ENCODE measurements at regions of chr1 and their contacts with region 1.

Region 1: DNA sequence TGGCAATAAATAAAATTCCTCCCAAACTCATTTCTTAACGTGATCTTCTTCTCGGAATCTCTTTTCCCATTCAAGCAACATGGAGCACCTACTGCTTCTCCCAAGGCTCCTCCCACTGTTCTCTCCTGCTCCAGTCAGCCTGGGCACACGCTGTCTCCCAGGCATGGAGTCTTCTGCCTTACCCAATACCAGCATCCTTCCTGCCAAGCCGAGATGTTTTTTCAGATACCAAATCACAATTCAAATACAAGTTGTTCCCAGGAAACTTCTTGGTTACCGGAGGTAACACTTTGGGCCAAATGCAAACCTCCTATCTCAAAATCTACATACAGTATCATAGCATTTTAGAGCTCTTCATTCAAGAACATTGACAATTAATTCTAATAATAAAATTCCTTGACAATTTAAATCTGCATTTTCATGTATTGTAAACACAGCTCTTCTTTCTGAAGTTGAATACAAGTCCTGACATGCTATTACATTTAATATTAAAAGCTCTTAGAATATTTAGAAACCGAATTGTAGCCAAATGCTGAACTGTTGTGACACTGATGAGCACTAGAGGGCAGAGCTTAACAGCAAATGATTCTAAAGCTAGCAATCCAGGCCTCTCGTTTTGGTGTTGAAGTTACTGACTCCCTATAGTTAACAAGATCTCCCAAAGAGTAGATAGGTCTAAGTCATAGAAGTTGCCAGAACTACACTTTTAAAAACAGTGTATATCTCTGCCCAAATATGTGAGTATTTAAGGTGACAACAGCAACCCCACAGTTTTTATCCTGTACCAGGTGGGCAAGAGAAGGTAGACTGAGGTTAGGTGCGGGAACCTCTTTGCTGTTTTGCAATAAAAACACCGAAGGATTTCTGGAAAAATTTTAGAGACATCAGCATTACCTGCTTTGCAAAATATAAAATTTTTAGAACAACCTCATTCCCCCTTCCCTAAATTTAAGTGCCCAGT is 52.3 kb downstream of the BCAR3 start:
- DNase-seq: peak; percentile 62
- H3K4me3 ChIP-seq: no peak overlapping the region
- H3K27ac ChIP-seq: no peak overlapping the region
- H3K4me1 ChIP-seq: no peaks in the 10 kb centered on the region
- H3K27me3 ChIP-seq: no peaks in the 10 kb centered on the region
- CTCF ChIP-seq: peak; percentile 80

Region 2: DNA sequence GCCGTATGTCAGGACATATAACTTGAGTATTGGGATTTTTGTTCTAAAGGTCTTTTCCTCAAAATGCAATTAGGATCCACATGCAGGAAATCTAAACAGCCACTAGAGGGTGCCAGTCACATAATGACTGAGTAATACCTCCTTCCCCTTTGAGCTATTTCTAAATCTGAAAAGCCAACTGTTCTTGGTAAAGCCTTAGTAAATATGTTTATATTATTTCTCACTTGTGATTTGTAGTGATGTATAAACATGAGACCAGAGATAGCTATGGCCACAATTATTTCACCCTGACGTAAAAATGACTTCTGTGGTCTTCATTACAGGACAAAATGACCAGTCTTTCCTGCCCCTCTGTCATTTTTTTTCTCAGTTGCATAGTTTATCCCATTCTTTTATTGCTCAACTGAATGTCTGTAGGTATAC is 324.7 kb before region 1 on chr1:
- intact Hi-C with region 1: loop called (anchors 10 kb)
- DNase-seq: peak; percentile 53
- H3K4me3 ChIP-seq: no peak overlapping the region
- H3K27ac ChIP-seq: no peak overlapping the region
- H3K4me1 ChIP-seq: no peaks in the 10 kb centered on the region
- H3K27me3 ChIP-seq: no peaks in the 10 kb centered on the region
- CTCF ChIP-seq: peak; percentile 92

Region 3: DNA sequence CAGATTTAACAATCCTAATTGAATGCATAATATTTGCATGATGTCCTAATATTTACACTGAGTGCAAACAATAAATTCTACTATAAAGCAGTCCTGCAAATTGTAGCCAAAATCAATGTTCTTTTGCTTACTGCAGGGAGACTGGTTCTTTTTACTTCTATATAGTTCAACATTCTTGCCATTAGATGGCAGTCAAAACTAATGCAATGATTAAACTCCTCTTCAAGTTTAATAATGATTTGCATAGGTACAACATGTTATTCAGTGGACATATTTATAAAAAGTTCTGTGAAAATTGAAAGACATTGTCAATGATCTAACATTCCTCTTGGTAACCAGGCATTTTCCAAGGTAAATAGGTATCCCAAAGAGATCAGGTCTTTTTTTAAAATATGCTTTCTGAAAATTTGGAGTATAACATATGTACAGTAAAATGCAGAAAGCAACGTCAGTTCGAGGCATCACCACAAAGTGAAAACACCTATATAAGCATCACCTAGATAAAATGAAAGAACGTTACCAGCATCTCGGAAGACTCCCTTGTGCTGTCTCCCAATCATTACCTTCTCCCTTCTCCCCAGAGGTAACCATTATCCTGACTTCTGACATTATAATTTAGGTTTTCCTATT is 191.3 kb before region 1 on chr1:
- intact Hi-C with region 1: loop called (anchors 5 kb)
- DNase-seq: no peak
- H3K4me3 ChIP-seq: no peak overlapping the region
- H3K27ac ChIP-seq: no peak overlapping the region
- H3K4me1 ChIP-seq: no peaks in the 10 kb centered on the region
- H3K27me3 ChIP-seq: no peaks in the 10 kb centered on the region
- CTCF ChIP-seq: peak; percentile 69

Region 4: DNA sequence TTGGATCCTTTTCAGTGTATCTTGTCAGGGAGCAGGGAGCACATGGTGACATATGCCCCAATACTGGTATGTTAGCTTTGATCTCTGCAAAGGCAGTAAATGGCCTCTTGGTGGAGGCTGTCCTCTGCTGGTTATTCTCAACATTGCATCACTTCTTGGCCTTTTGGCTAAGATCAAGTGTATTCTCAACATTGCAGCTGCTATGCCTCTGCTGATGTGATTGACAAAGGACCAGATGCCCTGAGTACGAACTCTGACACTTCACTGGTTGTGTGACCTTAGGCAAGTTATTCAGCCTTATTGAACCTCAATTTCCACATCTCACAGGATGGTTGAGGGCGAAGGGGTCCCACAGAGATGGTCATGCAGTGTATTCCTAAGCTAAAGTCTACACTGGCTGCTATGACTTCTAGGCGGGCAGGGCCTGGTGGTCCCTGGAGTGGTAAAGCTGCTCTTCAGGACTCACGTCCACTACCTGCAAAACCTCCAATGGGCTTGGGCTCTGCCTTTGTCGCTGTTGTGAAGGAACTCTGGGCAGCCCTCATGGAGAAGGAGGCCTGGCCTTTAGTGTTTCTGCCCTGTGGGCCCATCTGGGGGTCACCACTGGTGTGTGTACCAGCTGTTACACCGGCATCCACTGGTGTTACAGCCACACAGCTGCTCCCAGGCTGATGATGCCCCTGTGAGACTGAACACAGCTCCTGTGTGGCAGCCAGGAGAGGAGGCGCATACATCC is 184.8 kb after region 1 on chr1:
- intact Hi-C with region 1: loop called (anchors 2 kb)
- DNase-seq: peak; percentile 69
- H3K4me3 ChIP-seq: no peak overlapping the region
- H3K27ac ChIP-seq: no peak overlapping the region
- H3K4me1 ChIP-seq: no peaks in the 10 kb centered on the region
- H3K27me3 ChIP-seq: no peaks in the 10 kb centered on the region
- CTCF ChIP-seq: peak; percentile 93

Region 5: DNA sequence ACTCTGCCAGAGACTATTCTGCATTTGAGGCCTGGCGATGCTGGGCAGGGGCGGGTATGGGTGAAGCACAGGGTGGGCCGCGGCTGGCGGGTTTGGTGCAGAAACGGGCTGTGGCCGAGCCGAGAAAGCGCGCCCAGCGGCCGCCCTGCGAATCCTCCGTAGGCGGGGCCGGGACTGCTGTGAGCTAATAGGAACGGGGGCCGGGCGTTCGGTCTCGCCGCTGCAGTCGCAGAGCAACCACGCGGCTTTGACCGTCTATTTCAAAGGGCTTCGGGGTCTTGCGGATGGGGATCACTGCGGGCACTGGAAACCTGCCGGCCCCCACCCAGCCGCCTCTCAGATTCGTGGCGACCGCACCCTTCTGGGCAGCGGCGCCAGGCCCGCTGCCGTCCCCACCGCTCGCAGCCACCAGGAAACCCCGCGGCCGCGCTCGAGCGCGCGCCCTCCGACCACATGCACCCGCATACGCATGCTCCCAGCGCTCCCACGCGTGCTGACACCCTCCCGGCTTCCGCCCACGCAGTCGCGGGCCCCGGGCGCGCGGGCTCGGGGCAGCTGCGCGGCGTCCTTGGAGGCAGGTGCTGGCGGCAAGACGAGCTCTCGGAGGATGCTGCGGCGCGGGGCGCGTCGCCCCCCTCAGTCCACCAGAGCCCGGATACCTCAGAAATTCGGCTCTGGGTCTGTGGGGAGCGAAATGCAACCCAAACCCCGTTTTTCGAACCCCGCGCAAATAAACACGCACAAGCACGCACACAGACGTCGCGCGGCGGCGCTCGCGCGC is 217.0 kb after region 1 on chr1:
- intact Hi-C with region 1: loop called (anchors 10 kb)
- DNase-seq: peak; percentile 90
- H3K4me3 ChIP-seq: peak overlapping the region; percentile 81
- H3K27ac ChIP-seq: peak overlapping the region; percentile 98
- H3K4me1 ChIP-seq: peaks cover 14% of the 10 kb centered on the region
- H3K27me3 ChIP-seq: no peaks in the 10 kb centered on the region
- CTCF ChIP-seq: peak; percentile 24